Thyroid gland (tissue), 4 donors: ENCODE measurements at regions of chr1 and their contacts with region 1.

Region 1: DNA sequence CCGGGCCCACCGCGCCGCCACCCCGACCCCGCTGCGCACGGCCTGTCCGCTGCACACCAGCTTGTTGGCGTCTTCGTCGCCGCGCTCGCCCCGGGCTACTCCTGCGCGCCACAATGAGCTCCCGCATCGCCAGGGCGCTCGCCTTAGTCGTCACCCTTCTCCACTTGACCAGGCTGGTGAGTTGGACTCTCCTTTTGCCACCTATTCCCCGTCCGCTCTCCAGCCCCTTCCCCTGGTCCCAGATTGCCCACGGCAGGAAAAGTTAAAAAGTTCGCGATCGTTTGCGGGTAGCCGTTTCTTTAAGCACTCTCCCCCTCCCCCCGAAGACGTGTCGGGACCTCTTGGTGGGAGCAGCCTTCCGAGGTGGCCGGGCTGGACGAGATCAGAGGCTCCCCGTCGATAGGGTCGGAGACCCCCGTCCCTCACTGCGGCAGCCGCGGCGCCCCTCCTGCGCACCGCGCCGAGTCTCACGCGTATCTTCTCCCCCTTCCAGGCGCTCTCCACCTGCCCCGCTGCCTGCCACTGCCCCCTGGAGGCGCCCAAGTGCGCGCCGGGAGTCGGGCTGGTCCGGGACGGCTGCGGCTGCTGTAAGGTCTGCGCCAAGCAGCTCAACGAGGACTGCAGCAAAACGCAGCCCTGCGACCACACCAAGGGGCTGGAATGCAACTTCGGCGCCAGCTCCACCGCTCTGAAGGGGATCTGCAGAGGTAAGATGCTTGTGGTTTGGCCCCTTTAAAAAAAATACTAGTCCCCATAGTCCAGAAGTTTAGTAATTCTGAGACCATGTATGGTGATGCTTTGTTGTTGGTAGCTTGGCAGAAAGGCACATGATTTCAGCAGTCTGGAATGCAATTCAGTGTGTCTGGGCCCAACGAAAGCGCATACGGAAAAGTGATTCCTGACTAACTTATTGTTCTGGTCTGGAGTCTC is 576 bp downstream of the CCN1 start:
- DNase-seq: peak; percentile 79 to 82
- H3K4me3 ChIP-seq: peak overlapping the region; percentile 37 to 92 (median 86)
- H3K27ac ChIP-seq: peak overlapping the region; percentile 97 to 99 (median 99)
- H3K4me1 ChIP-seq: peaks cover 32 to 33% of the 10 kb centered on the region in 2 donors
- H3K27me3 ChIP-seq: no peaks in the 10 kb centered on the region
- CTCF ChIP-seq: peak; percentile 50 to 91 (median 78)
- POLR2A ChIP-seq: peak; percentile 3 to 62

Region 2: GRCh38 chr1:85692730-85693314 is 111.7 kb after region 1 on chr1:
- intact Hi-C with region 1: loop called (anchors 10 kb)
- DNase-seq: no peak
- H3K4me3 ChIP-seq: no peak overlapping the region
- H3K27ac ChIP-seq: no peak overlapping the region
- H3K4me1 ChIP-seq: no peaks in the 10 kb centered on the region
- H3K27me3 ChIP-seq: no peaks in the 10 kb centered on the region
- CTCF ChIP-seq: peak in 3 of 6 experiments; percentile 55 to 73 (median 65)
- POLR2A ChIP-seq: no peak

Region 3: GRCh38 chr1:85975912-85976371 is 394.8 kb after region 1 on chr1:
- intact Hi-C with region 1: no loop called
- DNase-seq: no peak
- H3K4me3 ChIP-seq: no peak overlapping the region
- H3K27ac ChIP-seq: no peak overlapping the region
- H3K4me1 ChIP-seq: no peaks in the 10 kb centered on the region
- H3K27me3 ChIP-seq: no peaks in the 10 kb centered on the region
- CTCF ChIP-seq: no peak
- POLR2A ChIP-seq: no peak